Endothelial cell of umbilical vein (primary cell): ENCODE measurements at regions of chr6 and their contacts with region 1.

Region 1: GRCh38 chr6:32952817-32953739 is at the start of gene HLA-DMA:
- DNase-seq: peak; percentile 96
- H3K4me3 ChIP-seq: no peak within 1 kb of the TSS
- H3K27ac ChIP-seq: no peak within 1 kb of the TSS
- H3K4me1 ChIP-seq: no peaks in the 10 kb centered on the region
- H3K27me3 ChIP-seq: no peaks in the 10 kb centered on the region
- CTCF ChIP-seq: peak; percentile 80 to 81
- POLR2A ChIP-seq: no peak
- total RNA-seq, gene HLA-DMA: 0.53 and 1.2 TPM in 2 replicates

Region 2: DNA sequence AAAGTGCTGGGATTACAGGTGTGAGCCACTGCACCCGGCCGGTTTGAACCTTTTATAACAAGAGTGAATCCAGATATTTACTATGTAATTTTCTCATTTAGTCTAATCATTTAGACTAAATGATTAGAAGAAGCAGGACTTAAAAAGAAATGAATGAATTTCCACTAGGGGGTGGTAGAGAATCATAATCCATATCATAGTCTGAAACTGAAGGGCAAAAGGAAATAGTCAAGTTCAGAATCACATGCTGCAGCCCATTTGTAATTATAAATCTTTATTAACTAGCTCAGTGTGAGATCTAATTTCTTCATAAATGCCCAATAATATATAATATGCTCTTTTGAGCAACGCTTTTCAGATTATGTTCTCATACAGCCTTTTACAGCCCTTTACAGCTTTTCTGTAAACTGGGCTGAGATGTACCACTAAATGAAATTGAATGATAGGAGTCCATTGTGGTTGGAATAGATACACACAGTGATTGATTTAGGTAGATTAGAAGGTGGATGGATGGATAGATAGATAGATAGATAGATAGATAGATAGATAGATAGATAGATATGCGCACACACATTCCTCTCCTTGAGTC is 67.3 kb before region 1 on chr6:
- CTCF ChIA-PET with region 1: interaction called, 29 read pairs
- POLR2A ChIA-PET with region 1: no interaction called
- dilution Hi-C with region 1: no loop called
- intact Hi-C with region 1: loop called (anchors 1 kb)
- DNase-seq: peak; percentile 72
- H3K4me3 ChIP-seq: no peak overlapping the region
- H3K27ac ChIP-seq: no peak overlapping the region
- H3K4me1 ChIP-seq: peaks cover under 1% of the 10 kb centered on the region
- H3K27me3 ChIP-seq: peaks cover 28 to 30% of the 10 kb centered on the region in 2 experiments
- CTCF ChIP-seq: peak; percentile 34
- POLR2A ChIP-seq: no peak

Region 3: DNA sequence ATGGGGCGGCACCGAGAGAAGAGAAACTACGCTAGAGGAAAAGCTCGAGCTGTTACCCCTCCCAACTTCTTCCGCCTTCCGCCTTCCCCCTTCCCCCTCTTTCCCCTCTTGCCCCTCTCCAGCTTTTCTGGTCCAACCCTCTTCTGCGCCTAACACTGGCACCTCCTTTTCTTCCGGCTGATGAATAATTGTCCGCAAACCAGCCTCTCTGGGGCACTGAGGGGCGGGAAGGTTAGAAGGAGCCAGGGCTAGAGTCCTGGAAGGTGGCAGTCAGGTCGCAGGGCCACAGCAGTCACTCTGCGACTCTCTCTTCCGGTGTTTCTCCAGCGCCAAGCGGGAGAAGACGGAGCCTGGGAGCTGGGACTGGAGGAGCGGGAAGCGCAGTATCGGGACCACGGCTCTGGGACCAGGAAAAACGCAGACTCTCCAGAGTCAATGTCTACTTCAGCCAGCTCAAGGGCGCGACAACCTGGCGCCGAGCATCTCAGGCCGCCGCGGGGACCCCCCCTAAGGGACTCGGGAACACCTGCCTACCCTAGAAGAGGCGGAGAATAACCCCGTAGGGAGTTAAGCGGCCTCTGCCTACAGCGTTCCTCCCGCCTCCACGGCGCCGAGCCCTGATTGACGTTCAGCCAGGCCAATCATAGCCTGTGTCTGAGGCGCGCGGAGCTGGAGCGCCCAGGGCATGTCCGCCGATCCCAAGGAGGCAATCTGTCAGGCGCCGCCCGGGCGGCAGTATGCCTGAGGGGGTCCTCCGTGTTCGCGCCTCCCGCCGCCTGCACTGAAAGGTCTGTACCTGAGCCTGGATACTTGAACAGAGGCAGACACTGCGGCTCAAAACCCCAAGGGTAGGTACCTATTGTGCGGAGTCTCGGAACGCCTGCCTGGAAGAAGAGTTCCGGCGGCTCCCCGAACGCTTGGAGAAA is 58.7 kb before region 1 on chr6:
- CTCF ChIA-PET with region 1: interaction called, 9 read pairs
- POLR2A ChIA-PET with region 1: no interaction called
- dilution Hi-C with region 1: no loop called
- intact Hi-C with region 1: loop called (anchors 2 kb)
- DNase-seq: peak; percentile 98
- H3K4me3 ChIP-seq: peak overlapping the region; percentile 24 to 67 (median 61)
- H3K27ac ChIP-seq: peak overlapping the region; percentile 45
- H3K4me1 ChIP-seq: peaks cover 17% of the 10 kb centered on the region
- H3K27me3 ChIP-seq: peaks cover 0 to 1% of the 10 kb centered on the region in 2 experiments
- CTCF ChIP-seq: no peak
- POLR2A ChIP-seq: peak; percentile 72

Region 4: DNA sequence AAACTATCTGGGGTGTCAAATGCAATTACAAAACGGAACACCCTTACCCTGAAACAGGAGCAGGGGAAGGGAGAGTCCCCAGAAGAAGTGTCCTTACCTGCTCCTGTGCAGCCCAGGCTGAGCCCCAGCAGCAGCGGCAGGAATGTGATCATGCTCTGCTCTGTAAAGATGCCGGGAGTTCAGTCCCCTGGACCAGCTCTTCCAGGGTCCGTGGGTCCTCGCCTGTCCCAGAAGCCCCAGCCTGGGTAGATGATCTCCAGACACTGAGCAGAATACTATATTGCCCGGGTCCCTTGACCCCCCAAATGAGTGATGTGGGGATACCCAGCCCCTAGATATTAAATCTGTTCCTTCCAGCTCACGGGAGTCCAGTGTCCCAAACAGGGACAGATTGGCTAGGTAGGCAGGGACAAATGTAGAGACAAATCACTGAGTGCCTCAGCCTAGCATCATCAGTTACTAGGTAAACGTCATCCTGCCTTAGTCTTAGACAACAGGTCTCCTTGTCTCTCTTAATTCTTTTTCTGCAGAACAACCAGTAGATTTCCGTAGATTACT is 12.3 kb before region 1 on chr6 and contains the start of gene HLA-DMB:
- CTCF ChIA-PET with region 1: interaction called, 174 read pairs
- POLR2A ChIA-PET with region 1: no interaction called
- dilution Hi-C with region 1: no loop called
- intact Hi-C with region 1: no loop called
- DNase-seq: peak; percentile 88
- H3K4me3 ChIP-seq: no peak within 1 kb of the TSS
- H3K27ac ChIP-seq: no peak within 1 kb of the TSS
- H3K4me1 ChIP-seq: peaks cover 7% of the 10 kb centered on the region
- H3K27me3 ChIP-seq: peaks cover 35 to 58% of the 10 kb centered on the region in 2 experiments
- CTCF ChIP-seq: no peak
- POLR2A ChIP-seq: no peak
- total RNA-seq, gene HLA-DMB: 0.39 TPM in 1 of 2 replicates, not detected in the other

Region 5: GRCh38 chr6:32964776-32965175 is 11.7 kb after region 1 on chr6:
- CTCF ChIA-PET with region 1: interaction called, 51 read pairs
- POLR2A ChIA-PET with region 1: interaction called, 58 read pairs
- dilution Hi-C with region 1: no loop called
- intact Hi-C with region 1: loop called (anchors 1 kb)
- DNase-seq: no peak
- H3K4me3 ChIP-seq: no peak overlapping the region
- H3K27ac ChIP-seq: no peak overlapping the region
- H3K4me1 ChIP-seq: peaks cover 26% of the 10 kb centered on the region
- H3K27me3 ChIP-seq: no peaks in the 10 kb centered on the region
- CTCF ChIP-seq: no peak
- POLR2A ChIP-seq: no peak

Region 6: DNA sequence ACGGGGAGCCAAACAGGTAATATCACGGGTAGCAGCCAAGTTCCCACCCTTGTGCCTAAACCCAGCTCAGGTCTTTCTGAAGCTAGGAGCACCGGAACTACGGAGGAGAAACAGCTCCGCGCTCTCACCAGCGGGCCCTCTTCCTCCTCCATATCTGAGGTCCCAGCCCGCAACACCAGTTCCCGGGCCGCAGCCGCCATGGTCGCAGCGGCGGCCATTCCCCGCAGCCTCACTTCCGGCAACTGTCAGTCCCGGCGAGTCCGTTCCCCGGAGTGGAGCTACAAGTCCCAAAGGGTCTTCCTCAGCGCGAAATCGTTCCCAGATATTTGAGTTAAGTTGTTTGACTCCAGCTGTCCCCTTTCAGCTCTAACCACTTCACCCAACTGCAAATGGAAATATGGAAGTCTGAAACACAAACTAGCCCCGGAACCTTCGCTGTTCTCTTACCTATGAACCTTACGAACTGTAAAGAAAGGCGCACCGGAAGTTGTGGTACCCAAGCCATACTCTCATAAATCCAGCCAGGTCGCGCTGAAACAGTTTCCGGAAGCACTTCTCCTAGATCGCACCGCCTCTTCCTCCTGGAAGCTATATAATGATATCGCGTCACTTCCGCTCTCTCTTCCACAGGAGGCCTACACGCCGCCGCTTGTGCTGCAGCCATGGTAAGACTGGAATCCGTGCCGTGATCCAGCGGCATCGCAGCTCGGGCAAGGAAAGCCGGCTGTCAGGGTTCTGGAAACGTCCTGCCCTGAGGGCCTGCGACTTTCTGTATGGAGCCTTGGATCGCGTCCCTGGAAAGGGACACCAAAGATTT is 318.6 kb after region 1 on chr6 and contains the starts of genes RPS18 and VPS52:
- CTCF ChIA-PET with region 1: no interaction called
- POLR2A ChIA-PET with region 1: no interaction called
- dilution Hi-C with region 1: no loop called
- intact Hi-C with region 1: no loop called
- DNase-seq: peak; percentile 99
- H3K4me3 ChIP-seq: peak within 1 kb of the TSS; percentile 83 to 96 (median 86)
- H3K27ac ChIP-seq: peak within 1 kb of the TSS; percentile 85
- H3K4me1 ChIP-seq: peaks cover 47% of the 10 kb centered on the region
- H3K27me3 ChIP-seq: no peaks in the 10 kb centered on the region
- CTCF ChIP-seq: no peak
- POLR2A ChIP-seq: peak; percentile 99
- total RNA-seq, gene RPS18: 2,193 and 2,336 TPM in 2 replicates
- total RNA-seq, gene VPS52: 43.8 and 49.2 TPM in 2 replicates